AG04449 (cell line): ENCODE measurements at regions of chr3 and their contacts with region 1.

Region 1: DNA sequence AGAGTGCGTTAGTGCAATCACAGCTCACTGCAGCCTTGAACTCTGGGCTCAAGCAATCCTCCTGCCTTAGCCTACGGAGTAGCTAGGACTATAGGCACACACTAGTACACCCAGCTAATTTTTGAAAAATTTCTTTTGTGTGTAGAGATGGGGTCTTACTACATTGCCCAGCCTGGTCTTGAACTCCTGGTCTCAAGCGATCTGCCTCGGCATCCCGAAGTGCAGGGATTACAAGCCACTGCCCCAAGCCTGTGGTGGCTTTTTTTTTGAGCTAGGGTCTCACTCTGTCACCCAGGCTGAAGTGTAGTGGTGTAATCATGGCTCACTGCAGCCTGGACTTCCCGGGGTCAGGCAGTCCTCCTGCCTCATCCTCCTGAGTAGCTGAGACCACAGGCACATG is 17.1 kb downstream of the PCCB start:
- DNase-seq: no peak
- H3K4me3 ChIP-seq: no peak overlapping the region
- CTCF ChIP-seq: no peak

Region 2: DNA sequence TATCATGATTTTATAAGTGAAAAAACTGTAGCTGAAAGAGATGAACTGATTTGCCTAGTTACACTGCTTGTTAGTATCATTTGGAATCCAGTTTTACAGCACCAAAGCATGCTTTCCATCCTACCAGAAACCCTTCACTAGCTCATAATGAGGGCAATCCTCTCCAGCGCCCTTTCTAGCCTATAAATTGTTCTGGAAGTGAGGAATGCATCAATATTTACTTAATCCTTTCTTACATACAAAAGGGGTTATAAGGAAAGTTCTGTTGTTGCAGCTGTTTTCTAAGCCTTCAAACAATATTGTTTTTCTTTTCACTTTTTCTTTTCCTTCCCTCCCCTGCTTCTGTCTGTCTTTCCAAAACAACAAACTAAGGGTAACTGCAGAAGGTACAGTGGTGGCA is 28.1 kb before region 1 on chr3:
- CTCF ChIA-PET with region 1: no interaction called
- POLR2A ChIA-PET with region 1: no interaction called
- DNase-seq: no peak
- H3K4me3 ChIP-seq: no peak overlapping the region
- CTCF ChIP-seq: no peak

Region 3: GRCh38 chr3:136250226-136250902 is 16.9 kb before region 1 on chr3 and contains the start of gene PCCB:
- CTCF ChIA-PET with region 1: interaction called, 10 read pairs
- POLR2A ChIA-PET with region 1: no interaction called
- DNase-seq: peak; percentile 52
- H3K4me3 ChIP-seq: peak within 1 kb of the TSS; percentile 82
- CTCF ChIP-seq: peak; percentile 83

Region 4: GRCh38 chr3:136366289-136366688 is 99.1 kb after region 1 on chr3:
- CTCF ChIA-PET with region 1: no interaction called
- POLR2A ChIA-PET with region 1: no interaction called
- DNase-seq: peak; percentile 26
- H3K4me3 ChIP-seq: no peak overlapping the region
- CTCF ChIP-seq: no peak